ENCODE measurements at regions of chr12 and their contacts with region 1.

Region 1: GRCh38 chr12:73136386-73136785 is 864.2 kb downstream of the TRHDE start:
- DNase-seq: no peak
- H3K4me3 ChIP-seq: no peak overlapping the region
- H3K27ac ChIP-seq: no peak overlapping the region
- H3K4me1 ChIP-seq: no peaks in the 10 kb centered on the region
- H3K27me3 ChIP-seq: no peaks in the 10 kb centered on the region
- CTCF ChIP-seq: no peak
- EP300 ChIP-seq: no peak
- POLR2A ChIP-seq: no peak

Region 2: DNA sequence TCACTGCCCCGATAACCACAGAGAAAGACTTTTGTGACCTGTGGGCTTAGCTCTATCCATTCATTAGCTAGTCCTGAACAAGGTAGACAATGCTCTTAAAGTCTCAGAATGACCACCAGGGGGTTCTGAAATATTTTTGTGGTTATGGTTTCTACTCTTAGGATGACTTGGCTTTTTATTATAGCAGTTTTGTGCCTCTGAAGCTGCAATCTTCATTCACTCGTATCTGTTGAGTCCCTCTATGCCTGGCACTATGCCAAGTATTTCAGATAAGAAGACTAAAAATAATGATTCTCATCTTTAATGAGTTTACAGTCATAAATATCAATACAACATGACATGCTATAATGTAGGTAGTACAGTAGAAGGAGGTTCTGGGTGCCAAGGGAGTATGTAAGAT is 995.0 kb before region 1 on chr12:
- intact Hi-C with region 1: no loop called
- DNase-seq: no peak
- H3K4me3 ChIP-seq: no peak overlapping the region
- H3K27ac ChIP-seq: no peak overlapping the region
- H3K4me1 ChIP-seq: no peaks in the 10 kb centered on the region
- H3K27me3 ChIP-seq: no peaks in the 10 kb centered on the region
- CTCF ChIP-seq: no peak
- EP300 ChIP-seq: no peak
- POLR2A ChIP-seq: no peak

Region 3: DNA sequence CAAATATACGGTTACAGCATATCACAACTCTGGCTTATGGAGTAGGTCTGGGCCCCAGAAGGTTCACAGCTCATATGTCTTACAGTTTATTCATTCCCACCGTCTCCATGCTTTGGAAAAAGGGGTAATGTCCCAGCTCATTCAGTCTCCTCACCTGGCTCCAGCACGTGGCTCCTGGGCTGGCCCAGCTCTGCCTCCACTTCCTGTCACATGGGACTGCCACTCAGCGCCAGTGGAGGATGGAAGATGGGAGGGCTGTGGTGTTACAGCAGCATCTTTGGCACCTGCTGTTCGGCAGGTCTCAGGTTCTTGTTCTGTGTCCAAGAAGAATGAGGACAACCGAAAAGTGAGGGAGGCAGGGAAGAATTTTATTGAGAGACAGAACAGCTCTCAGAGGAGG is 1185.0 kb after region 1 on chr12:
- intact Hi-C with region 1: loop called in 1 of 4 experiments (anchors 5 kb)
- DNase-seq: no peak
- H3K4me3 ChIP-seq: no peak overlapping the region
- H3K27ac ChIP-seq: no peak overlapping the region
- H3K4me1 ChIP-seq: no peaks in the 10 kb centered on the region
- H3K27me3 ChIP-seq: no peaks in the 10 kb centered on the region
- CTCF ChIP-seq: no peak
- EP300 ChIP-seq: no peak
- POLR2A ChIP-seq: no peak